ENCODE measurements at regions of chr6 and their contacts with region 1.

Region 1: GRCh38 chr6:84908304-84908904 is 144.0 kb upstream of the TBX18 start:
- DNase-seq: no peak
- H3K4me3 ChIP-seq: no peak overlapping the region
- H3K27ac ChIP-seq: no peak overlapping the region
- H3K4me1 ChIP-seq: no peaks in the 10 kb centered on the region
- H3K27me3 ChIP-seq: no peaks in the 10 kb centered on the region
- CTCF ChIP-seq: no peak

Region 2: DNA sequence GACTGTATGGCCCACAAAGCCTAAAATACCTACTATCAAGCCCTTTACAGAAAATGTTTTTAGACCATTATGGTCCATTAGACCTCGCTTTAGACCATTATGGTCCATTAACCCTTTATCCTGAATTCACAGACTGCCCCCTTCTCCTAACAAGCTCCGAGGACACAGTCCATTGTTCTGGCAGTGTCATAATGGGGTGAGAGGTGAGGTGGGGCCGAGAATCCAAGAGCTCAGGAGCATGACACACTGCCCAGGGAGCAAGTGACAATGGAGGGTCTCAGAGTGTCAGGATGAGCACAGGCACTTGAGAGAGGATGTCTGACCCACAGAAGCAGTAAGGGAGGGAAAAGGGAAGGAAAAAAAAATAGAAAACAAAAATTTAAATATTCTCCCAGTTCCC is 329.1 kb after region 1 on chr6:
- CTCF ChIA-PET with region 1: interaction called, 30 read pairs
- dilution Hi-C with region 1: no loop called
- in situ Hi-C with region 1: no loop called
- intact Hi-C with region 1: no loop called
- DNase-seq: no peak
- H3K4me3 ChIP-seq: no peak overlapping the region
- H3K27ac ChIP-seq: no peak overlapping the region
- H3K4me1 ChIP-seq: no peaks in the 10 kb centered on the region
- H3K27me3 ChIP-seq: peaks cover 3% of the 10 kb centered on the region
- CTCF ChIP-seq: no peak